Activated T-helper 1 cell treated with anti-CD3 and anti-CD28 coated beads, Interleukin-12 subunit alpha, Interleukin-12 subunit beta, Interleukin-2, Interleukin-4 antibody, amounts not matched to agents 30 ng/mL and 10 ng/mL and 1 ng/mL, durations not matched to agents 14 hours and 24 hours and 36 hours (primary cell): ENCODE measurements at regions of chr12 and their contacts with region 1.

Region 1: GRCh38 chr12:40152783-40153383 is 47.0 kb upstream of the SLC2A13 start:
- DNase-seq: no peak
- H3K4me3 Mint-ChIP-seq: no peak overlapping the region
- H3K27ac Mint-ChIP-seq: no peak overlapping the region
- H3K4me1 Mint-ChIP-seq: no peaks in the 10 kb centered on the region
- H3K27me3 Mint-ChIP-seq: peaks cover 30% of the 10 kb centered on the region

Region 2: DNA sequence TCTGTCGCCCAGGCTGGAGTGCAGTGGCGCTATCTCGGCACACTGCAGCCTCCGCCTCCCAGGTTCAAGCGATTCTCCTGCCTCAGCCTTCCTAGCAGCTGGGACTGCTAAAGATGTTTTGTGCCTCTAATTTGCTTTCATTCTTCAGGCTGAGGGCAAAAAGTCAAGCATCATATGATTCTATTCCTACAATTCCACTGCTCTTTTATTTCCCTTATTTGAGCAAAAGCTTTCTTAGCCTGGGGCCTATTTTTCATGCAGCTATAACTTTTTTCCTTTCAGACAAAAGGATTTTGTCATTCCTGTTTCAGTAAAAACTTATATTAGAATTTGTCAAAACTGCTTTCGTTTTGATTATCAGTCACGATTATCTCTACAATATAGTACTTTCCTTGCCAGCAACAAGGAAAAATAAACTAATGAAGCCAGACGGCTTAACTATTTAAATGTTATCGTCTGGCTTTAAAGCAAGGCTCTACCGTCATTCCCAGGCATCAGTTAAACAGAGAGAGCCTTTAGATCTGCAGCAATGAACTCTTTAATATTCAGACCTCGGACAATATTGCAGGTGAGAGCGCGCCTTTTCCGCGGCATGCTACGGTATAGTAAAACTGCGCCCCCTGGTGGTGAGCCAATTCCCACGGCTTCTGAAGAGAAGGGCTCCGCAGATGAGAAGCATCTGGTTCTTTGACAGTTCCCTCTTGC is 45.6 kb before region 1 on chr12:
- intact Hi-C with region 1: no loop called
- DNase-seq: peak; percentile 69
- H3K4me3 Mint-ChIP-seq: peak overlapping the region; percentile 80
- H3K27ac Mint-ChIP-seq: peak overlapping the region; percentile 26
- H3K4me1 Mint-ChIP-seq: peaks cover 30% of the 10 kb centered on the region
- H3K27me3 Mint-ChIP-seq: peaks cover 47% of the 10 kb centered on the region

Region 3: GRCh38 chr12:40224439-40225291 is 71.8 kb after region 1 on chr12 and contains the start of gene LRRK2:
- intact Hi-C with region 1: loop called (anchors 5 kb)
- DNase-seq: no peak
- H3K4me3 Mint-ChIP-seq: peak within 1 kb of the TSS; percentile 55
- H3K27ac Mint-ChIP-seq: no peak within 1 kb of the TSS
- H3K4me1 Mint-ChIP-seq: peaks cover 6% of the 10 kb centered on the region
- H3K27me3 Mint-ChIP-seq: peaks cover 46% of the 10 kb centered on the region
- total RNA-seq, gene LRRK2: not detected in 2 replicates

Region 4: DNA sequence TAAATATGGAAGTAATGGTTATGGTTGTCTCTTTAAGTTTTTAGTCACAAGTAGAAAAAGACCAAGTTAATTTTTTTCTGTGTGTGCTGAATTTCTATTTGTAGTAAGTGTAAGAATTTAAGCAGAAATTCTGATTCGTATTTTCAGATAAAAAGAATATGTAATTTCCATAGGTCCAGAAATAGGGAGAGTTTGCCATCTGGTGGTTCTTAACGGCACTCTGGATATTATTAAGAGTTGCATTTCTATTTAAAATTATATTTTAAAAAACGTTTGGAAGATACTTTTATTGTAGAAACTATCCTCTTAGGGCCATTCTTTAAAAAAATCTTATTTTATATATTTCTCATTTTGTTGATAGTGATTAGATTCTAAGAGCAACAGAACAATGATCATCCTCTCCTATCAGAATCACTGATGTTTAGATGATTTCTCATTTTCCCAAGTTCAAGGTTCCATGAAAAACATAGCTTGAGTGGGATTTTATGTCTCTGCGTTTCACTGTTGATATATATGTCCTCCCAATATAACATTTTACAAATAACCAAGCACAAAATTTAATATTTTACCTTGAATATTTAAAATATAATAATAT is 160.2 kb after region 1 on chr12:
- intact Hi-C with region 1: loop called (anchors 1 kb)
- DNase-seq: no peak
- H3K4me3 Mint-ChIP-seq: no peak overlapping the region
- H3K27ac Mint-ChIP-seq: no peak overlapping the region
- H3K4me1 Mint-ChIP-seq: no peaks in the 10 kb centered on the region
- H3K27me3 Mint-ChIP-seq: peaks cover 4% of the 10 kb centered on the region

Region 5: DNA sequence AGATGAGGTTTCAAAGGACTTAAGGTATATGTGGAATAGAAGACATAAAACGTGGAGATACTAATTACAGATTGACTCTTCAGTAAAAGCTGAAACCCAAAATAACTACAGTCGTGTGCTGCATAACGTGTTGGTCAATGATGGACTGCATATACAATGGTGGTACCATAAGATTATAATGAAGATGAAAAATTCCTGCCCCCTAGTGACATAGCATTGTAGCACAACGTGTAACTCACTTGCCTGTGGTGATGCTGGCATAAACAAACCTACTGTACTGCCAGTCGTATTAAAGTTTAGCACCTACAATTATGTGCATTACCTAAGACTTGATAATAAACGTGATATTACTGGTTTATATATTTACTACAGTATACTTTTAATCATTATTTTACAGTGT is 222.2 kb after region 1 on chr12:
- intact Hi-C with region 1: loop called (anchors 2 kb)
- DNase-seq: no peak
- H3K4me3 Mint-ChIP-seq: no peak overlapping the region
- H3K27ac Mint-ChIP-seq: no peak overlapping the region
- H3K4me1 Mint-ChIP-seq: no peaks in the 10 kb centered on the region
- H3K27me3 Mint-ChIP-seq: no peaks in the 10 kb centered on the region

Region 6: GRCh38 chr12:40921563-40922163 is 768.8 kb after region 1 on chr12:
- intact Hi-C with region 1: loop called (anchors 5 kb)
- DNase-seq: no peak
- H3K4me3 Mint-ChIP-seq: no peak overlapping the region
- H3K27ac Mint-ChIP-seq: no peak overlapping the region
- H3K4me1 Mint-ChIP-seq: no peaks in the 10 kb centered on the region
- H3K27me3 Mint-ChIP-seq: no peaks in the 10 kb centered on the region